Endothelial cell of umbilical vein (primary cell): ENCODE measurements at regions of chr11 and their contacts with region 1.

Region 1: DNA sequence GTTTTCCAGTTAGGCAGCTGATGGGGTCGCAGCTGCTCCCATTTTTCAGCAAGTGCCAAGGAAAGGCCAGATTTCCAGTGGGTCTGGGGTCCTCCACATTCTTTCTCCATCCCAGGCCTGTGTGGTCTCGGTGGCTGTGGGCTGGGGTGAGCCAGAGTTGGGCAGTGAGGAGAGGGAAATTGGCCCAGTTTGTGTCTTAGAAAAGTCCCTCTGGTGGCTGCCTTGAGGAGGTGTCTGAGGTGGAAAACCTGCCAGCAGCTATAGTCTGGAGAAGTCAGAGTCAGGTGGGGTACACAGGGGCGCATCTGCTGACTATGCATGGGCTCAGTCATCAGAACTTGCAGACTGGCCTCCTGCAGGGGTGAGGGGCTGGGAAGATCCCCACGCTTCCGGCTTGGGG is 30.5 kb downstream of the MRGPRD start:
- DNase-seq: peak; percentile 19
- H3K4me3 ChIP-seq: no peak overlapping the region
- H3K27ac ChIP-seq: no peak overlapping the region
- H3K4me1 ChIP-seq: peaks cover 5% of the 10 kb centered on the region
- H3K27me3 ChIP-seq: no peaks in the 10 kb centered on the region
- CTCF ChIP-seq: peak; percentile 22 to 42
- POLR2A ChIP-seq: no peak

Region 2: DNA sequence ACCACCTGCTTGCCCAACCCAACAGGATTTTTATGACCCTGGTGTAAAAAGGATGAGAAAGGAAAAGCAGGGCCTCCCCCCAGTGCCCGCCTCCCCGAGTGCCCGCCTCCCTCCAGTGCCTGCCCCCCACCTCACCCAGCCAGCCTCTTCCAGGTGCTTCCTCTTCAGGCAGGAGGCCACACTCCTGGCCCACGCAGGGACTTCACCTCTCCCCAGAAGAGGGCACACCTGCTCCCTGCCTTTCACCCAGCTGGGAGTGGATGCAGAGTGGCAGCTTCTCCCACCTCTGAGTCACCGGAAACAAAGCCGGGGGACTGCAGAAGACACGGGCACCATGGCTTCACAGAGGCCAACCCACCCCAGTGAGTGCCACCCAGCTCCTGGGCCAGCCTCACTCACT is 124.7 kb before region 1 on chr11:
- CTCF ChIA-PET with region 1: no interaction called
- POLR2A ChIA-PET with region 1: no interaction called
- dilution Hi-C with region 1: no loop called
- intact Hi-C with region 1: loop called (anchors 5 kb)
- DNase-seq: peak; percentile 78
- H3K4me3 ChIP-seq: no peak overlapping the region
- H3K27ac ChIP-seq: no peak overlapping the region
- H3K4me1 ChIP-seq: no peaks in the 10 kb centered on the region
- H3K27me3 ChIP-seq: no peaks in the 10 kb centered on the region
- CTCF ChIP-seq: peak; percentile 10 to 52
- POLR2A ChIP-seq: no peak

Region 3: GRCh38 chr11:69374110-69374945 is 424.1 kb after region 1 on chr11:
- CTCF ChIA-PET with region 1: no interaction called
- POLR2A ChIA-PET with region 1: no interaction called
- dilution Hi-C with region 1: no loop called
- intact Hi-C with region 1: no loop called
- DNase-seq: peak; percentile 54
- H3K4me3 ChIP-seq: no peak overlapping the region
- H3K27ac ChIP-seq: no peak overlapping the region
- H3K4me1 ChIP-seq: no peaks in the 10 kb centered on the region
- H3K27me3 ChIP-seq: no peaks in the 10 kb centered on the region
- CTCF ChIP-seq: no peak
- POLR2A ChIP-seq: no peak